Activated CD8-positive, alpha-beta T cell treated with anti-CD3 and anti-CD28 coated beads, Interleukin-2, amount 10 ng/mL, durations not matched to agents 7 days and 5 days (primary cell): ENCODE measurements at regions of chr5 and their contacts with region 1.

Region 1: GRCh38 chr5:154405078-154405792 is 40.6 kb upstream of the SAP30L start:
- DNase-seq: peak; percentile 81
- ATAC-seq: peak; percentile 99
- H3K4me3 Mint-ChIP-seq: peak overlapping the region; percentile 48
- H3K27ac Mint-ChIP-seq: no peak overlapping the region
- H3K4me1 Mint-ChIP-seq: peaks cover 12% of the 10 kb centered on the region
- H3K27me3 Mint-ChIP-seq: no peaks in the 10 kb centered on the region

Region 2: DNA sequence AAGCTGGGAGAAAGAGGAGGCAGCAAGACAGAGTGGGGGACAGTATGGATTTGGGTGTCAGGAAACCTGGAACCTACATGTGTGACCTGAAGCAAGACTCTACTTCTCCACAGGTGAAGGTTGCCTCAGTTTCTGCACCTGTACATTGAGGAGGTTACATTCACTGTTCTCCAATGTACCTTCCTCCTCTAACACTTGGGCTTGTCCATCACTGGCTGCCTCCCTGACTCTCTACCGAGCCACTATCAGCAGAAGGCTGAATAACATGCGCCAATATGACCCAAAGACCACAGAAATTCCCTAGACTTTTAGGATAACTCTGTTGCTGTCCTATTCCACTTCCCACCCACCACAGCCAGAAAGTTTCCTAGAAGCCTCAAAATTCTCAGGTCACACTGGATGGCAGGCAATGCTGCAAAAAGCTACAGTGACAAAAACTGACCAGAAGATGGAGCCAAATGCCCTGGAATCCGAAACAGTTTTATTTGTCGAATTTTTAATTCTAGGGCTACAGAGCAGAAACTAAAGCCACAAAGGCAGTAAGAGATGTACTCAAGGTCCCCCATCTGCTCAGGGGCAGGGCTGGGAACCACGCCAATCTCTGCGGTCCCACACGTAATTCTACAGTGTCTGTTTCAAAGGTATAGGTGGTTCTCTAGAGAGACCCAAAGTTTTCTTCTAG is 431.0 kb before region 1 on chr5:
- CTCF ChIA-PET with region 1: interaction called, 24 read pairs
- POLR2A ChIA-PET with region 1: no interaction called
- DNase-seq: peak; percentile 62
- ATAC-seq: peak; percentile 69
- H3K4me3 Mint-ChIP-seq: no peak overlapping the region
- H3K27ac Mint-ChIP-seq: no peak overlapping the region
- H3K4me1 Mint-ChIP-seq: peaks cover 3% of the 10 kb centered on the region
- H3K27me3 Mint-ChIP-seq: peaks cover 9% of the 10 kb centered on the region

Region 3: GRCh38 chr5:154077696-154078095 is 327.5 kb before region 1 on chr5:
- CTCF ChIA-PET with region 1: interaction called, 100 read pairs
- POLR2A ChIA-PET with region 1: interaction called, 3 read pairs
- DNase-seq: no peak
- ATAC-seq: no peak
- H3K4me3 Mint-ChIP-seq: no peak overlapping the region
- H3K27ac Mint-ChIP-seq: no peak overlapping the region
- H3K4me1 Mint-ChIP-seq: peaks cover 43% of the 10 kb centered on the region
- H3K27me3 Mint-ChIP-seq: no peaks in the 10 kb centered on the region

Region 4: DNA sequence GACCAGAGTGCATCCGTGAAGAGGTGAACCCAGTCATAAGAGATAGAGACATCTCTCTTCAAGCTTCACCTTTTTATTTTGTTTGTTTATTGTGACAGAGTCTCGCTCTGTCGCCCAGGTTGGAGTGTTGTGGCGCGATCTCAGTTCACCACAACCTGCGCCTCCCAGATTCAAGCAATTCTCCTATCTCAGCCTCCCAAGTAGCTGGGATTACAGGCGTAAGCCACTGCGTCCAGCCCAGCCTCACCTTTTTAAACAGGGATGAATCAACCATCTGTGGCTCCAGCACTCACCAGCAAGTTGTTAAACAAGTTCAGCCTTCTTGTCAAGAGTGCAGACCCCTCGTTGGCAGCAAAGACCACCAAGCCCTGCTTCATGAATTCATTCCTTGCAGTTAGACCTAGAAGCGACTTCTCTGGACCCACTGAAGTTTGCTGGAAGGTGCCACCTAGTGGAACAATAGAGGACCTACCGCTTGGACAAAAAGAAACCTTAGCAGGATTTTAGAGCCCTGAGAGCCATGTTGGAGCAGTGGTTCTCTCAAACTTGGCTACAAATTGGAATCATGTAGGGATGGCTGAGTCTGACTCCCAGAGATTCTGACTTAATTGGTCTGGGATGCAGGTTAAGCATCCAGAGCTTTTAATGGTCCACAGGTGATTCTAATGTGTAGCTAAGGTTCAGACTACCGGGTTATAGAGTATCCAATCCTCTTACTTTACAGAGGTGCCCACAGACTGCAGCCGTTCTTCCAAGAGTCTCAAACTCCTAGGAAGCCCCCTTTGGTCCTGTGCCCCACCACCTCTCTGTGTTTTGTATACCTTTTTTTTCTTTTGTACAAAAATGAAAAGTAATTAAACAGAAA is 225.2 kb before region 1 on chr5:
- CTCF ChIA-PET with region 1: interaction called, 19 read pairs
- POLR2A ChIA-PET with region 1: no interaction called
- DNase-seq: peak; percentile 62
- ATAC-seq: peak; percentile 94
- H3K4me3 Mint-ChIP-seq: no peak overlapping the region
- H3K27ac Mint-ChIP-seq: no peak overlapping the region
- H3K4me1 Mint-ChIP-seq: peaks cover 6% of the 10 kb centered on the region
- H3K27me3 Mint-ChIP-seq: peaks cover 31% of the 10 kb centered on the region

Region 5: GRCh38 chr5:154196955-154197652 is 208.1 kb before region 1 on chr5:
- CTCF ChIA-PET with region 1: interaction called, 29 read pairs
- POLR2A ChIA-PET with region 1: no interaction called
- DNase-seq: no peak
- ATAC-seq: no peak
- H3K4me3 Mint-ChIP-seq: no peak overlapping the region
- H3K27ac Mint-ChIP-seq: peak overlapping the region; percentile 12
- H3K4me1 Mint-ChIP-seq: peaks cover 62% of the 10 kb centered on the region
- H3K27me3 Mint-ChIP-seq: peaks cover 2% of the 10 kb centered on the region

Region 6: DNA sequence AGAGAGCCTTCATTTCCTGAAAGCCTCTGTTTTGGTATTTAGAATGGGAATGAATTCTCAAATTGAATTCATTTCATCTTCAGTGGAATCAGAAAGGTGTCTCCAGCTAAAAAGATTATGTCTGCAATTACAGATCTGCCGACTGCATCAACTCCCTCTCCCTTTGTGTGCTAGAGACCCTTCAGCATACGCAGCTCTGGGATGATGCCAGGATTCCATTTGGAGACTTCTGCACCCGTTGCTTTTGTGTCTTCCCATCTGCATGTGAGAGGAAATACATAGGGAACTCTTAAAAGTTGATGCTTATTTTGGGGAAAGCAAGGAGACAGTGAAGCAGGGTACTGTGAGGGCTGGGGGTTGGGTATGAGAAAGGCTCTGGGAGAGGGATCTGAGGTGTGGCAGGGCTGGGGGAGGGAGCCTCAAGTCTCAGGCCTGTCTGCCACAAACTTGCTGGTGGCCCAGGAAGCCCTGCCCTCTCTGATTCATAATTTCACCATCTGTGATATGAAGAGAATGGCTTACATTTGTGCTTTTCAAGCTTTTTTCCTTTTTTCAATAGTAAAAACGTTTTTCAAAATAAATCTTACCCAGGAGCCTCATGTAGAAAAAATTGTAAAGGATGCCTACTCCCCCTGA is 49.1 kb before region 1 on chr5:
- CTCF ChIA-PET with region 1: no interaction called
- POLR2A ChIA-PET with region 1: no interaction called
- DNase-seq: no peak
- ATAC-seq: no peak
- H3K4me3 Mint-ChIP-seq: no peak overlapping the region
- H3K27ac Mint-ChIP-seq: no peak overlapping the region
- H3K4me1 Mint-ChIP-seq: peaks cover 18% of the 10 kb centered on the region
- H3K27me3 Mint-ChIP-seq: no peaks in the 10 kb centered on the region